Pancreas (tissue), 10 donors: ENCODE measurements at regions of chr2 and their contacts with region 1.

Region 1: DNA sequence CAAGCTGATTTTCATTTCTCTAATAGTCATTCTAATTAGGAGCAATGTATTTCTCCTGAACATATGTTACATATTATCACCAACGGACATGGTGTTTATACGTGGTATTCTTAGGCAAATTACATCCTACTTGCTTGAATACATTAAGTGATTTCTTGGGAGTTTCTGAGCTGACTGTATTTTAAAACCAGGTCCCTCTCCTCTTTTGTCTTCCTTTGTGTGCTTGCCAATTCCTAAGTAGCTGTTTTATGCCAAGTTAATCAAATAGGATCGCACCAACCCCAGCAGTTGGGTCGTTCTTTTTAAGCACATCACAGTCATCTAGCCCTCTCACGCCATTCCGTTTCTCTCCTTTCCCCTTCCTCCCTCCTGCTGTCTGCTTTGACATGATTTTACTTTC is 75.4 kb upstream of the MAP2 start:
- DNase-seq: no peak
- ATAC-seq: no peak
- H3K4me3 ChIP-seq: no peak overlapping the region
- H3K27ac ChIP-seq: no peak overlapping the region
- H3K4me1 ChIP-seq: no peaks in the 10 kb centered on the region
- H3K27me3 ChIP-seq: no peaks in the 10 kb centered on the region
- CTCF ChIP-seq: no peak

Region 2: DNA sequence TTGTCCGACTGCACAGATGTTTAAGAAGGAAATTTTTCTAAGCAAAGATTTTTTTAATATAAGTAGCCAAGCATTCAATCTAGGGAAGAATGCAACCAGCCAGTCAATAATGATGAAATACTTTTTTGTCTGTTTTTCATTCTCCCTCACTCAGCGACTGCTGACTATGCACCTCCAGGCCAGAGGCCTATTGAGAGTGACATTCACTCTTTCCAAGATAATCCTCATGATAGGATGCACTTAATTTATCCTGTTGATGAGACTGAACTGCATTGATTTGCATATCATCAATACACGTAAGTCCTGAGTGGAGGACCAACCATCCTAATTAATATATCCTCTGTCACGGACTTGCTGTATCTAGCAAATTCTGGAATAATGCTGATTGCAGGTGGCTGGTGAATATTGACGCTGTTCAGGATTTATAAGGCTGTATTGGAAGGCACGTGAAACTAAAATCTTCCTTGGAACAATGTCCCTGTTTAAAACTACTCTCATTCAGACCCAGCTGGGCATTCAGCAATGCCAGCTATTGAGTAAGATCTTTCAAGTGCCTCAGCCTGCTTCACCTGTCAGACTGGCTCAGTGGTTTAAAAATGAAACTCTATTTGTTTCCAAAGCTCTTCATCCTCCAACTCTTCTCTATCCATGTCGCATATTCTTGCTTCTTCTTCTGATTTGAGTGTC is 217.6 kb after region 1 on chr2:
- intact Hi-C with region 1: loop called in 2 of 3 experiments (anchors 10 kb)
- DNase-seq: no peak
- ATAC-seq: peak in 3 of 4 donors; percentile 38 to 51 (median 46)
- H3K4me3 ChIP-seq: no peak overlapping the region
- H3K27ac ChIP-seq: no peak overlapping the region
- H3K4me1 ChIP-seq: no peaks in the 10 kb centered on the region
- H3K27me3 ChIP-seq: no peaks in the 10 kb centered on the region
- CTCF ChIP-seq: no peak

Region 3: DNA sequence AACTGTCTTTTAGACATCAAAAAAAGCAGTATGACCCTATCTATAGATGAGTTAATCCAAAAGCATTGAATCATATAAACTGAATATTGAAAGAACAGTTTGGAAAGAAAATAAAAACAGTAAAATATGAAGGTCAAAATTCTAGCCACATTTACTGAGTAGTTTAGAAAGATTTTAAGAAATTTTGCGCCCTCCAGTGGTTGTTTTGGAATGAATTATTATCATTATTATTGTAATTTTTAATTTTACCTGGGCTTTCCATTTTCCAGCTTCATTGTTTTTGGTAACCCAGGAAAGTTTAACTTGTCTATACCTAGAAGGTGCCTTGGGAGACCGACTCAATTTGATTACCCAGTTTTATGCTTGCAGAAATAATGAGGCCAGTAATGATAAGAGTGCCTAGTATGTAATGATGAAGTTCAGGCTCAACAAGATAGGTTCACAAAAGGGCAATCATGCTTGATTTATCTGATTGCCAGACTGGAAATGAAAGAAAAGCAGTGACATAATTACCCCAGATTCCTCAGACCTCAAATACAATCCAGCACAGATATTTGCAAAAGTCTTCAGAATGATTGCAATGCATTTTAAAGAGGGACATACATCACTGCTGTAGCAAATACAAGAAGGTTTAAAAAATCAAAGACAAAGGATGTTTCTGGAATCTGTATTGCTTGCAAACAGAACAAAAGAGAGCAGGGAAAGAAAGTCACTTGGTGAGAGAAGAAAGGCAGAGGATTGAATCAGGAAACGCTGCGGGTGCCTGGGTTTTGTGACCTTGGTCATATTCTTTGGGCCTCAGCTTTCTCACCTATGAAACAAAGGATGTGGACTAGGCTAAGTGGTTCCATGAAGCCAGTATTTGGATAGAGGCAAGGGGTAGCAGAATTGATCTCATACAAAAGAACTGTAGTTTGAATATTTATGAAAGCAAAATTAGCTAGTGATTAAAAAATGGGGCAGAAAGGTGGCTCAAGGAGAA is 229.2 kb after region 1 on chr2:
- intact Hi-C with region 1: loop called in 1 of 3 experiments (anchors 10 kb)
- DNase-seq: no peak
- ATAC-seq: peak in 1 of 4 donors; percentile 18
- H3K4me3 ChIP-seq: no peak overlapping the region
- H3K27ac ChIP-seq: no peak overlapping the region
- H3K4me1 ChIP-seq: no peaks in the 10 kb centered on the region
- H3K27me3 ChIP-seq: no peaks in the 10 kb centered on the region
- CTCF ChIP-seq: peak in 3 of 4 donors; percentile 16 to 31 (median 20)